ENCODE measurements at regions of chr21 and their contacts with region 1.

Region 1: DNA sequence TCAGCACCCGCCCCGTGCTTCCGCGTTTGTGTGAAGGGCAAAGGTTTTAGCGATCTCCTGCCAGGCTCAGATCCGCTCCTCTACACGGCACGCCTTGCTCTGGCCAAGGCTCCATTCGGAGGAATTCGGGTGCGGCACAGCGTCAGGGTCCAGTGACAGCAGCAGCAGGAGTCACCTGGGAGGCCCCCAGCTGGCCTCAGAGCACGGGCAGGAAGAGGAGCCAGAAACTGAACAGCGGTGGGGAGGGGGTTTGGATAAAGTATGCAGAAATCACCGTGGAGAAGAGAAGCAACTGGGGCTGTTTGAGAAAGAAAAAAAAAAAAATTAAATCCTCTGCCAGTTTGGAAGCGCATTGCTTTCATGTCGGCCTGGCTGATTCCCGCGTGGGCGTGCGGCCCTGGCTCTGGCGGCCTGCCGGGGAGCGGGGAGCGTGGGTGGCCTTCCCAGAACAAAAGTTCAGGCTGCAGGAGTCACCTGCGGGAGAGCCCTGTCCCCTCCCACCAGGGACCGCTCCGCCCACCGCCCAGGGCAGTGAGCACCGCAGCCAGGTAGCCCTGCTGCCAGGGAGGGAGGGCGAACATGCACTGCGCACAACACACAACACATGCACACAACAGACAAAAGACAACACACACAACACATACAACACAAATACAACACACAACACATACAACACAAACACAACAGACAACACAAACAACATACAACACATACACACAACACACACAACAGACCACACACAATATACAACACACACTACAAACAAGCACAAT is 107.6 kb downstream of the ETS2 start:
- DNase-seq: peak; percentile 93

Region 2: GRCh38 chr21:38755681-38756371 is 157.5 kb before region 1 on chr21:
- intact Hi-C with region 1: loop called in 1 of 2 experiments (anchors 10 kb)
- DNase-seq: peak; percentile 86

Region 3: DNA sequence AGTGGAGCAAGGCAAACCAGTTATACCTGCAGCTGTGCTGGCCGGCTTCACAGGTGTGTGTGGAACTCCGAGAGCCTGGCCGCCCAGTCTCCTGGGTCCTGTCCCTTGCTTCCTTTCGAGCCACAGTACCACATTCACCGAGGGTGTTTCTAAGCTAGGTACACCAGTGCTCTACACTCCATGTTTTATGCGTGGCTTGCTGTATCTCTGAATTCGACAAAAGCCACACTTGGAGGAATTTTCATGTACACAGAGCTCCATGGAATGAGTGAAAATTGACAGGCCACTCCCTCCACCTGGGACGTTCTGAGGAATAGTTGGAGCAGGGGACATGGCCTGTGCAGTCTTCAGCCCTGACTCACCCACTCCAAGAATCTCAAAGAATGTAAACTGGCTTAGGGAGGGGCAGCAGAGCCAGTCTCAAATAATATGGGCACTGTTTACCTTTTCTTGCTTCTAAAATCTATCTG is 93.6 kb before region 1 on chr21:
- intact Hi-C with region 1: loop called in 1 of 2 experiments (anchors 5 kb)
- DNase-seq: no peak

Region 4: GRCh38 chr21:38955461-38955860 is 42.2 kb after region 1 on chr21:
- intact Hi-C with region 1: loop called in 1 of 2 experiments (anchors 1 kb)
- DNase-seq: peak; percentile 54